ENCODE measurements at regions of chr2 and their contacts with region 1.

Region 1: DNA sequence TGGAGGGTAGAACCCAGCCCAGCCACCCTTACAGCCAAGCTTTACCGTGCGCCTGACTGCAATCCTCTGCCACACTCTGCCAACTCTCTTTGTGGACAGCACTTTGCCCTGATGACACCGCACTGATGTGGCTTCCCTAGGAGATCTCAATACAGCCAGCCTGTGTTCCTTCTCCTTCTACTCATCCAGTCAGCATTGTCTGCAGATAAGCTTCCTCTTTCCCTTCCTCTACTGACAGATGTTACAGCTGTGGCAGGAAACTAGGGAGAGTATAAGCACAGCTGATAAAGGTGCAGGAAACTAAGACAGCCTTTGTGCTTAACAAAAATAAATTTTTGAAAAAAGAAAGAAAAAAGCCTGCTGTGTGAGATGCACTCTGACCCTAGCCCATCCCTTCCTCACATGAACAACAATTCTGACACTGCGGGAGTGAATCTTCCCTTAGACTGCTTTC is 25.0 kb downstream of the CEP68 start:
- DNase-seq: peak; percentile 91 to 99 (median 98)
- H3K4me3 ChIP-seq: peak overlapping the region in 1 of 7 experiments; percentile 48
- H3K27ac ChIP-seq: peak overlapping the region; percentile 42 to 69
- H3K4me1 ChIP-seq: peaks cover 6 to 42% (median 33%) of the 10 kb centered on the region in 4 experiments
- H3K27me3 ChIP-seq: no peaks in the 10 kb centered on the region

Region 2: DNA sequence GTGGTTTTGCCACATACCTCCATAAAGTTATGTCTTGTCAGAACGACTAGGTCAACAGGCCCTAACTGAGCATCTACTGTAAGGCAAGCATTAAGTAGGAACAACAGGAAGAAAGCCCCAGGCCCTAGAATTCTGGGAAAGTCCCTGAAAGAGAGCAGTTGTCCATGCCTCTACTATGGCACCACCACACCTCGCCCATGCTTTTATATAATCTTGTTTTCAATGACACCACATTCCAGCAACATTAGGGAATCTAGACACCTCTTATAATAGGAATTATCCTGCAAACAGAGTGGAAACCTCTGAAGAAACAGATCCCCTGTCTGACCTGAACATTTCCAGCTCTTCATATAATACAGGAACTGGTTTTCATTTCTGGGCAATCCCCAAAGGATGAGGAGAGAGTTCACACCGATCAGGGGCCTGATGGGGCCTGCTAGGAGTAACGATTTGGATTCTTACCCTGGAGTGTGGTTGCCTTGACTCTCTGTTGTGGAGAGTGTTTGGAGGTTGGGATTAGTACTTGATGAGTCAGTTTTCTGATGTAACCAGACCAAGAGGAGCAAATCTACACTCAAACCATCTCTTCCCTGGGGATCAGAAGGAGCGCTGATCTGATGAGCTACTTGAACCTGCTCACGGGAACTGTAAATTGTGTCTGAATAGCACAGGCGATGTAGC is 57.0 kb before region 1 on chr2:
- CTCF ChIA-PET with region 1: no interaction called
- POLR2A ChIA-PET with region 1: no interaction called
- DNase-seq: no peak
- H3K4me3 ChIP-seq: no peak overlapping the region
- H3K27ac ChIP-seq: no peak overlapping the region
- H3K4me1 ChIP-seq: peaks cover 0 to 19% (median 15%) of the 10 kb centered on the region in 4 experiments
- H3K27me3 ChIP-seq: no peaks in the 10 kb centered on the region

Region 3: GRCh38 chr2:65096948-65097347 is 15.7 kb after region 1 on chr2:
- CTCF ChIA-PET with region 1: interaction called, 12 read pairs
- POLR2A ChIA-PET with region 1: interaction called, 3 read pairs
- DNase-seq: no peak
- H3K4me3 ChIP-seq: no peak overlapping the region
- H3K27ac ChIP-seq: peak overlapping the region in 1 of 2 experiments; percentile 19
- H3K4me1 ChIP-seq: peaks cover 0 to 10% (median 5%) of the 10 kb centered on the region in 4 experiments
- H3K27me3 ChIP-seq: no peaks in the 10 kb centered on the region

Region 4: GRCh38 chr2:65129826-65130663 is 48.8 kb after region 1 on chr2 and contains the start of gene RAB1A:
- CTCF ChIA-PET with region 1: interaction called, 16 read pairs
- POLR2A ChIA-PET with region 1: interaction called, 22 read pairs
- DNase-seq: peak; percentile 100
- H3K4me3 ChIP-seq: peak within 1 kb of the TSS; percentile 94 to 100 (median 97)
- H3K27ac ChIP-seq: peak within 1 kb of the TSS; percentile 94 to 98
- H3K4me1 ChIP-seq: peaks cover 10 to 40% (median 24%) of the 10 kb centered on the region in 4 experiments
- H3K27me3 ChIP-seq: no peaks in the 10 kb centered on the region

Measured in common myeloid progenitor, CD34-positive (primary cell).